Caco-2 (cell line): ENCODE measurements at regions of chr9 and their contacts with region 1.

Region 1: DNA sequence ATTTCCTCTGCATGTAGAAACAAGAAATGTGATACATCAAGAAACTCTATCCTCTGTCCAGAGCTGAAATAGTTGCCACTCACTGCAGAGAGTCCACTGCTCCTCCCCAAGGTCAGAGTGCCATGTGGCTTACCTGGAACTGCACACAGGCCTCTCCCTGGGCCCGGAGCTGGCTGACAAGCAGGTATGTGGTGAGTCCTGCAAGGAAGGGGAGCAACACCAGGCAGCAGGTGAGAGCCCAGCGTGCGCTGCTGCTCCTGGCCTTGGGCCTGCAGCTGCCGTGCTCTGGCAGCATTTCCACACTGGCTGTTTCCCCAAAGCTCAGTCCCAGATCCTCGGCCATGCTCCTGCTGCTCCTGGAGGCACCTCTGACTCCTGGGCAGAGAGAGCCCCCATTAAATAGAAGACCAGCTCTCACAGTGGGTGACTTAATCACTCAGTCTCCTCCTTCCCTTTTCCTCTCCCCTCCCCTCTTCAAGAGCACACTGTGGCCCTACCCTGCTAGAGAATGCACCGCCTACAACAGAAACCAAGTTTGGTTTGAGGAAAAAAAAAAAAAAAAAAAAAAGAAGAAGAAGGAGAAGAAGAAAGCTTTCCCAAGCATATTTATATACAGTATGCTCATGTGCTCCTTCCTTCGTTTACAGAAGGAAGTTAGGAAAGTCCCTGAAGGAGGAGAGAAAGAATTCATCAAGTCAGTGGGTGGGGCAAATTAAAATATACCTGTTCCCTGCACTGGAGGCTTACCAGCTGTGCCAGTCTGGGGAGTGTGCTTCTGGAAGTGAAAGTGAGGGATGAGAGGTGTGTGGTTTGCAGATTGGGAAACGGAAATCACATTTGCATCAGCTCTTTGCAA is at the start of gene TNFSF15:
- DNase-seq: peak; percentile 63 to 80
- H3K4me3 ChIP-seq: no peak within 1 kb of the TSS
- H3K4me3 Mint-ChIP-seq: peak within 1 kb of the TSS; percentile 56
- H3K27ac Mint-ChIP-seq: peak within 1 kb of the TSS; percentile 25
- H3K4me1 ChIP-seq: peaks cover 40% of the 10 kb centered on the region
- H3K4me1 Mint-ChIP-seq: peaks cover 29% of the 10 kb centered on the region
- H3K27me3 ChIP-seq: no peaks in the 10 kb centered on the region
- H3K27me3 Mint-ChIP-seq: peaks cover 6% of the 10 kb centered on the region
- CTCF ChIP-seq: no peak
- total RNA-seq, gene TNFSF15: 0.66 and 1.00 TPM in 2 replicates

Region 2: DNA sequence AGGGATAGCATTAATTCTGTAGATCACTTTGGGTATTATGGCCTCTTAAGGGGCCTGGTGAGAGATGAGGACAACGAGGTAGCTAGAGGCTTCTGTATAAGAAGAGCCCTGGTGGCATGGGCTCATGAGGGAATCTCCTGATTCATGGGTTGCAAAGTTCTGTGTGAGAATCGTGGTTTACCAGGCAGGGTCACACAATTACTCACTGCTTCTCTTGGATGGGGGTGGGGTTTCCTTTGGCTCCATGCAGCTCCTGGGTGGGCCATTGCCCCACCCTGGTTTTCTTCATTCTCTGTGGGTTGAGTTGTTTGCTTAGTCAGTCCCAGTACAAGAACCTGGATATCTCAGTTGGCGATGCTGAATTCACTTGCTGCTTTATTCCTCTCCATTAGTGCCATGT is 30.9 kb after region 1 on chr9:
- CTCF ChIA-PET with region 1: no interaction called
- POLR2A ChIA-PET with region 1: no interaction called
- intact Hi-C with region 1: no loop called
- DNase-seq: no peak
- H3K4me3 ChIP-seq: no peak overlapping the region
- H3K4me3 Mint-ChIP-seq: no peak overlapping the region
- H3K27ac Mint-ChIP-seq: no peak overlapping the region
- H3K4me1 ChIP-seq: no peaks in the 10 kb centered on the region
- H3K4me1 Mint-ChIP-seq: no peaks in the 10 kb centered on the region
- H3K27me3 ChIP-seq: no peaks in the 10 kb centered on the region; the same call in 1 of the 2 replicates
- H3K27me3 Mint-ChIP-seq: peaks cover 6% of the 10 kb centered on the region
- CTCF ChIP-seq: no peak

Region 3: GRCh38 chr9:114852050-114852594 is 46.2 kb after region 1 on chr9:
- CTCF ChIA-PET with region 1: no interaction called
- POLR2A ChIA-PET with region 1: no interaction called
- intact Hi-C with region 1: loop called (anchors 1 kb)
- DNase-seq: peak; percentile 5 to 43
- H3K4me3 ChIP-seq: no peak overlapping the region
- H3K4me3 Mint-ChIP-seq: no peak overlapping the region
- H3K27ac Mint-ChIP-seq: no peak overlapping the region
- H3K4me1 ChIP-seq: peaks cover 26% of the 10 kb centered on the region
- H3K4me1 Mint-ChIP-seq: peaks cover 24% of the 10 kb centered on the region
- H3K27me3 ChIP-seq: no peaks in the 10 kb centered on the region
- H3K27me3 Mint-ChIP-seq: no peaks in the 10 kb centered on the region
- CTCF ChIP-seq: no peak